ENCODE measurements at regions of chr18 and their contacts with region 1.

Region 1: DNA sequence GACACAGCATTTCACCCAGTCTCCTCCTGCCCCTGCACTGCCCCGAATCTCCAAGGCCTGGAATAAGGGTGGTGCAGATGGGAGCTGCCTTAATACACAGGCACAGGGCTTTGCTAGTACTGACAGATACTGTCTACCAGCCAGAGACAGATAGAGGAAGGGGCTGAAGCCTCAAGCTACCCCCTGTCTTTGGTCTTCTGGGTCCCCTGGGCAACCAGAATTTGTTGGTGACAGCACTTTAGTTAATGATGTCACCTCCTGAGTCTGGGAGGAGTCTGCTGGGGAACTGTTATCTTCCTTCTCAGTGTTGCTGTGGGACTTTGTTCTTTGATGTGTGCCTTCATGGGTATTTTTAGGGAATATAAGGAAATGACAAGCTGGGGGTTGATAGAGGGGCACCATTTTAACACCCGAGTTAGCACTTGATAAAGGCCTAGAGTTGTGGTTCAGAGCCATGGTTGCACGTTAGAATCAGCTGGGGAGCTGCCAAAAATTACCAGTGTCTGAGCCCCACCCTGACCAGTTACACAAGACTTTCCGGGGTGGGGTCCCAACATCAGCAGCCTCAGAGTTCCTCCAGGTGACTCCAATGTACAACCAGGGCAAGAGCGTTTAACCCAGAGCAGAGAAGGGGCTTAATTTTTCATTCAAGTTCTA is 136.8 kb downstream of the SMAD7 start:
- DNase-seq: peak in 12 of 14 experiments; percentile 34 to 89 (median 44)
- ATAC-seq: peak; percentile 78
- H3K4me3 ChIP-seq: no peak overlapping the region
- H3K4me3 Mint-ChIP-seq: peak overlapping the region; percentile 5
- H3K27ac ChIP-seq: peak overlapping the region; percentile 47 to 93
- H3K27ac Mint-ChIP-seq: peak overlapping the region; percentile 86
- H3K4me1 ChIP-seq: peaks cover 42% of the 10 kb centered on the region
- H3K4me1 Mint-ChIP-seq: peaks cover 42% of the 10 kb centered on the region
- H3K27me3 ChIP-seq: no peaks in the 10 kb centered on the region
- H3K27me3 Mint-ChIP-seq: no peaks in the 10 kb centered on the region
- CTCF ChIP-seq: no peak

Region 2: GRCh38 chr18:48834413-48835031 is 20.6 kb after region 1 on chr18:
- CTCF ChIA-PET with region 1: interaction called, 3 read pairs
- POLR2A ChIA-PET with region 1: interaction called, 24 read pairs
- intact Hi-C with region 1: loop called in 1 of 2 experiments (anchors 2 kb)
- DNase-seq: peak; percentile 40 to 91 (median 62)
- ATAC-seq: peak; percentile 72
- H3K4me3 ChIP-seq: peak overlapping the region; percentile 54
- H3K4me3 Mint-ChIP-seq: peak overlapping the region; percentile 90
- H3K27ac ChIP-seq: peak overlapping the region; percentile 46 to 85
- H3K27ac Mint-ChIP-seq: peak overlapping the region; percentile 76
- H3K4me1 ChIP-seq: peaks cover 99% of the 10 kb centered on the region
- H3K4me1 Mint-ChIP-seq: peaks cover 84% of the 10 kb centered on the region
- H3K27me3 ChIP-seq: no peaks in the 10 kb centered on the region
- H3K27me3 Mint-ChIP-seq: no peaks in the 10 kb centered on the region
- CTCF ChIP-seq: no peak

Region 3: GRCh38 chr18:49072524-49072934 is 258.6 kb after region 1 on chr18:
- CTCF ChIA-PET with region 1: no interaction called
- POLR2A ChIA-PET with region 1: no interaction called
- intact Hi-C with region 1: no loop called
- DNase-seq: no peak
- ATAC-seq: no peak
- H3K4me3 ChIP-seq: no peak overlapping the region
- H3K4me3 Mint-ChIP-seq: no peak overlapping the region
- H3K27ac ChIP-seq: no peak overlapping the region
- H3K27ac Mint-ChIP-seq: no peak overlapping the region
- H3K4me1 ChIP-seq: no peaks in the 10 kb centered on the region
- H3K4me1 Mint-ChIP-seq: no peaks in the 10 kb centered on the region
- H3K27me3 ChIP-seq: no peaks in the 10 kb centered on the region
- H3K27me3 Mint-ChIP-seq: no peaks in the 10 kb centered on the region
- CTCF ChIP-seq: no peak

Region 4: GRCh38 chr18:49250816-49251388 is 436.9 kb after region 1 on chr18:
- CTCF ChIA-PET with region 1: no interaction called
- POLR2A ChIA-PET with region 1: no interaction called
- intact Hi-C with region 1: no loop called
- DNase-seq: no peak
- ATAC-seq: no peak
- H3K4me3 ChIP-seq: no peak overlapping the region
- H3K4me3 Mint-ChIP-seq: no peak overlapping the region
- H3K27ac ChIP-seq: no peak overlapping the region
- H3K27ac Mint-ChIP-seq: no peak overlapping the region
- H3K4me1 ChIP-seq: no peaks in the 10 kb centered on the region
- H3K4me1 Mint-ChIP-seq: no peaks in the 10 kb centered on the region
- H3K27me3 ChIP-seq: no peaks in the 10 kb centered on the region
- H3K27me3 Mint-ChIP-seq: no peaks in the 10 kb centered on the region
- CTCF ChIP-seq: peak; percentile 52

Measured in CD4-positive, alpha-beta T cell (primary cell).